Left cardiac atrium (tissue), 4 donors: ENCODE measurements at regions of chr9 and their contacts with region 1.

Region 1: GRCh38 chr9:17531642-17532254 is 47.1 kb upstream of the SH3GL2 start:
- DNase-seq: peak; percentile 24
- ATAC-seq: no peak

Region 2: GRCh38 chr9:17600962-17601593 is 69.3 kb after region 1 on chr9:
- intact Hi-C with region 1: no loop called
- DNase-seq: no peak
- ATAC-seq: no peak

Region 3: DNA sequence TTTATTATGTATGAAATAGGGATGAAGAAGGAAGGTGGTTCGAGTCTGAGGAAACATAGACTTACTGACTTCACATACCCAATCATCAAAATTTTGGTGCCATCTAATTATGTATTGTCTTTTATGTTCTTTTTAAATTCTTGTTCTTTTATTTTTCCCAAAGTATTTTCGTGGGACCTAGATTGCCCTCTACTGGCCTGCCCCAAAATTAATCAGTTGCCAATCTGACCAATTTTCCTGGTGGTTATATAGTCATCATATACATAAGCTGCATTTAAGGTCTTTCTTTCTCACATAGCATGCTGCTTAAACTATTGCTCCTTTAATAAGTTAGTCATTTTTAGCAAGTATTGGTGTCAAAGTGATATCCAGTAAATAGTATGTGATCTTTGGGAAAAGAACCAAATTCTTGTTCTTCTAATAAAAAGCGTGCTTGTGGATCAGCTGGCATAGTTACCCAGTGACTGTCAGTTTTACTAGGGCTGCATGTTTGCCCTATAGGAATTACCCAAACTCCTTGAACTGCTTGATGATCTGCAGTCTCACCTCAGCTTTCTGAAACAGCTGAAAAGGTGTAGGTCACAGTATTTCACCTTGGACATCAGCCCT is 270.6 kb after region 1 on chr9:
- intact Hi-C with region 1: loop called (anchors 5 to 10 kb)
- DNase-seq: no peak
- ATAC-seq: no peak

Region 4: DNA sequence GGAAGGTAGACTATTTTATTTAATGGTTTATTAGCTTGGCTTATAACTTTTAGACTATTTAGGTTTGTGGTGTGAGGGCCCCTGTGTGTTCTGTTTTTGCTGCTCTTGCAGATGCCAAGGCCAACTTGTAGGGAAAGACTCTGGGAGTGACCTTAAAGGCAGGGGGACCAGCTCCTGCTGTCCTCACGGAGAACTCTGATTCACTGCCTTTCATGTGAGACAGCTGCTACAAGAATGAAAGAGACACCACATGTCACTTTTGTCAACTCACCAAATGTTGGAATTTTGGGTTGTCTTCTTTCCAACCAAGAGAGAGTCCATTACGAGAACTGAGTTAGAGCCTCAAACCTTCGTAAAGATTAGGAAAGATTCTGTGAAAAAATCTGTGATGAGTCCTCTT is 683.9 kb after region 1 on chr9:
- intact Hi-C with region 1: loop called (anchors 5 to 10 kb)
- DNase-seq: no peak
- ATAC-seq: no peak